Activated CD4-positive, alpha-beta T cell treated with anti-CD3 and anti-CD28 coated beads, Interleukin-2, amount 10 ng/mL, durations not matched to agents 24 days and 14 days (primary cell): ENCODE measurements at regions of chr14 and their contacts with region 1.

Region 1: GRCh38 chr14:88667555-88668273 is 104.9 kb downstream of the ZC3H14 start:
- DNase-seq: peak; percentile 83
- H3K4me3 Mint-ChIP-seq: no peak overlapping the region
- H3K27ac Mint-ChIP-seq: no peak overlapping the region
- H3K4me1 Mint-ChIP-seq: no peaks in the 10 kb centered on the region
- H3K27me3 Mint-ChIP-seq: no peaks in the 10 kb centered on the region

Region 2: GRCh38 chr14:88868558-88869159 is 200.9 kb after region 1 on chr14:
- intact Hi-C with region 1: loop called (anchors 5 kb)
- DNase-seq: no peak
- H3K4me3 Mint-ChIP-seq: no peak overlapping the region
- H3K27ac Mint-ChIP-seq: no peak overlapping the region
- H3K4me1 Mint-ChIP-seq: no peaks in the 10 kb centered on the region
- H3K27me3 Mint-ChIP-seq: no peaks in the 10 kb centered on the region

Region 3: DNA sequence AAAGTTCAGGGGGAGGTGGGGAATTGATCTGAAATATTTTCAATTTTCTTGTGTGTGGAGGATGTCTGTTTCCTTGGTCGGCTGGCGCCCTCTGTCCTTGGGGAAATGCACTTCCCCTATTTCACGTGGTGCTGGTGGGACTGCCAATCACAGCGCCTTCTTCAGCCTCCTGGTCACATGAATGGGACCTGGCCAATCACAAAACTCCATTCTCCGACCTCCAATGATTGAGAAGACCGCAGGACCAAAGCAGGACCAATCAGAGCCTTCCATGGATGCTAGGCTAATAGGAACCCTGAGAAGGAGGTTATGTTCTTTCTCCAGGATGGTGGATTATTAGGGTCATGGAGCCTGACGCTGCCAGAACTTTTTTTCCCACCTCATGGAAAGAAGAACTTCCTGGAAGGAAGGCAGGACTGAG is 345.4 kb after region 1 on chr14:
- intact Hi-C with region 1: loop called (anchors 5 kb)
- DNase-seq: no peak
- H3K4me3 Mint-ChIP-seq: no peak overlapping the region
- H3K27ac Mint-ChIP-seq: no peak overlapping the region
- H3K4me1 Mint-ChIP-seq: no peaks in the 10 kb centered on the region
- H3K27me3 Mint-ChIP-seq: peaks cover 6% of the 10 kb centered on the region

Region 4: GRCh38 chr14:89027097-89027740 is 359.5 kb after region 1 on chr14:
- intact Hi-C with region 1: loop called (anchors 5 kb)
- DNase-seq: peak; percentile 89
- H3K4me3 Mint-ChIP-seq: peak overlapping the region; percentile 68
- H3K27ac Mint-ChIP-seq: no peak overlapping the region
- H3K4me1 Mint-ChIP-seq: no peaks in the 10 kb centered on the region
- H3K27me3 Mint-ChIP-seq: peaks cover 60% of the 10 kb centered on the region